ENCODE measurements at regions of chr20 and their contacts with region 1.

Region 1: DNA sequence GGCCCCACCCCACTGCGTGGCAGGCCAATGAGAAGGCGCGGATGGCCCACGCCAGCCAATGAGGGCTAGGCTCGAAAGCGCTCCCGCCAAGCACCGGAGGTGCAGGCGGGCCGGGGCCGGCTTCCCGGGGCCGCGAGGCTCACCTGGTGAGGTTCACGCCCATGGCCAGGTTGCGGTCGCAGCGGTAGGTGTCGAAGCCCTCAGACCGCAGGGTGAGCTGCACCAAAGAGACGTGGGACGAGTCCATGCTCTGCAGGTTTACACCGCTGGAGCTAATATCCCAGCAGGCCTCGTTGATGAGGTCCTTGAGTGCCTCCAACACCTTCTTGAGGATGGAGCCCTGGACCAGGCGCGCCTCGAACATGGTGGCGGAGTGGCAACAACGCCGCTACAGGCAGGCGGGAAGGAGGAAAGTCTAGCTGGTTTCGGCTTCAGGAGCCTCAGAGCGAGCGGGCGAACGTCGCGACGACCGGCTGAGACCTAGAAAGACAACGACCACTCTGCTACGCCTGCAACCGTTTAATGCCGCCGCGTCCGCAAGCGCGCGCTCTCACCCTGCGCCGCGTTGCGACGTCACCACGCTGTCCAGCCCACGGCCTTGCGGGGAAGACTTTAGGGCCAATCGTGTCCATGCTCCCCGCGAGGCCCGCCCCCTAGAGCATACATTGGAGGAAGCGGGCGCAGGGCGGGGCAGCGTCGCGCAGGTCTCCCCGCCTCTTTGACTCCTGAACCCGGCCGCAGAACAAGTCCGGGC is at the start of gene PCNA:
- DNase-seq: peak; percentile 98
- H3K4me3 Mint-ChIP-seq: peak within 1 kb of the TSS; percentile 90
- H3K27ac Mint-ChIP-seq: peak within 1 kb of the TSS; percentile 92
- H3K4me1 Mint-ChIP-seq: peaks cover 21% of the 10 kb centered on the region
- H3K27me3 Mint-ChIP-seq: no peaks in the 10 kb centered on the region
- CTCF ChIP-seq: no peak
- total RNA-seq, gene PCNA: 38.2 and 45.5 TPM in 2 replicates

Region 2: DNA sequence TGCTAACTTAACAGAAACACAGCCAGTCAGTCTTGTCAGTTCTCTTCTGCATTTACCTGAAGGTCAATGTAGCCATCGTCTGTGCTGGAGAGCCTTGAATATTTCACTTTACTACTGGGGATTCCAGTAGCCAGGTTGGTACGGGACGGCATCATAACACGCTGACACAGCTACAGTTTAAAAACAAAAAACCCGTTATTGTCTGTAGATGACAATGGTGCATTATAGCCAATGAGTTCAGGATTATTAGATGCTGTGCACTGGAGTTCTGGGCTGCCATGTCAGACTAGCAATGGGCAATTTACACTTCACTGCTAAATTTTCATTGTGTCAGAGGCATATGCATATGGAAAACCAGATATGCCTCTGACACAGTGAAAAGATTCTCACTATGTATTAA is 10.3 kb before region 1 on chr20:
- CTCF ChIA-PET with region 1: interaction called, 4 read pairs
- POLR2A ChIA-PET with region 1: interaction called, 22 read pairs
- intact Hi-C with region 1: no loop called
- DNase-seq: no peak
- H3K4me3 Mint-ChIP-seq: no peak overlapping the region
- H3K27ac Mint-ChIP-seq: no peak overlapping the region
- H3K4me1 Mint-ChIP-seq: no peaks in the 10 kb centered on the region
- H3K27me3 Mint-ChIP-seq: no peaks in the 10 kb centered on the region
- CTCF ChIP-seq: no peak

Region 3: DNA sequence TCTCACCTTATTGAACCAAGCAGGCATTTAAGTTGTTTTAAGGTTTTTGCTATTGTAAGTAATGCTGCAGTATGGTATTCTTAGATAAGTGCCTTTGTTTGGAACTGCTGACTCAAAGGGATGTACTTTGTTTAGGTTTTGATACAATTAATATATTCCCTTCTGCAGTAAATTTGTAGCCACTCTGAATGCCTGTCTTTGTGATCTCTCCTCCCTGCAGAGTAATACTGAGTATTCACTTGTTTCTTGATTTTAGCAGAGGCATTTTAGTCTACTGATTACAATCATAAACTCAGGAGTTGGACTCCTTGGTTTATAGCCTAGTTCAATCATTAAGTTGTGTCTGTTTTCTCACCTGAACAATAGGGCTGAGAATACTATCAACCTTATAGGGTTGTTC is 20.6 kb after region 1 on chr20:
- CTCF ChIA-PET with region 1: no interaction called
- POLR2A ChIA-PET with region 1: no interaction called
- intact Hi-C with region 1: no loop called
- DNase-seq: no peak
- H3K4me3 Mint-ChIP-seq: no peak overlapping the region
- H3K27ac Mint-ChIP-seq: no peak overlapping the region
- H3K4me1 Mint-ChIP-seq: no peaks in the 10 kb centered on the region
- H3K27me3 Mint-ChIP-seq: no peaks in the 10 kb centered on the region
- CTCF ChIP-seq: no peak